Uterus (tissue), 4 donors: ENCODE measurements at regions of chr1 and their contacts with region 1.

Region 1: GRCh38 chr1:160193091-160193819 is 2.9 kb downstream of the CASQ1 start:
- DNase-seq: peak; percentile 87 to 90
- H3K4me3 ChIP-seq: no peak overlapping the region
- H3K27ac ChIP-seq: no peak overlapping the region
- H3K4me1 ChIP-seq: peaks cover 0 to 5% of the 10 kb centered on the region in 2 donors
- H3K27me3 ChIP-seq: no peaks in the 10 kb centered on the region
- CTCF ChIP-seq: peak; percentile 93 to 98 (median 97)
- POLR2A ChIP-seq: peak in 1 of 2 donors; percentile 27

Region 2: DNA sequence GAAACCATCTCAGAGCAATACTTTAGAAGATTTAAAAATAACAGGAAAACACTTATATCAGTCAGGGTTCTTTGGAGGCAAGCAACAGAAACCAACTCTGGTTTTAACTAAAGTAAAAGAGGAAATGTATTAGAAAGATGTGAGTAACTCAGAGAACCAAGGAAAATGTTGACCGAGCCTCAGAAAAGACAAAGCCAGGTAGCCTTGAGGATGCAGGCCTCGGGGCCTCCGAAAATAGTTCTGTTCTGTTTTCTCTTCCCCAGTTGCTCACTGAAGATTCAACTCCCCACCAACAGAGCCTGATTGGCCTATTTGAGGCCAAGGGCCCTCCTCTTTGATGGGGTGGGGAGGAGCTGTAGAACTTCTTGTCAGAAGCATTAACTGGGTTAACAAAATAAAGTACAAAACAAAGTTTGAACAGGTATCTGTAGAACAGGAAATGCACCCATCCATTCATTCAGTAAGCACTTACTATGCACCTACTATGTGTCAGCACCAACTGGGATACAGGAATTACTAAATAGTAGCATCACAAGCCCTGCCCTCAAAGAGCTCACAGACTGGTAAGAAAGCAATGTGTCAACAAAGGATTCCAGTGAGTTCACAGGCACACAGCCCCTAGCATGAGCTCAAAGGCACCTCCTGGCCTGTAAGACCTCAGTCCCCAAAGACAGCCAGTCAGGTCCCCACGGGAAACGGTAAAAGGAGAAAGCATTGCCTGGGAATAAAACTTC is 354.0 kb before region 1 on chr1:
- intact Hi-C with region 1: no loop called
- DNase-seq: no peak
- H3K4me3 ChIP-seq: no peak overlapping the region
- H3K27ac ChIP-seq: no peak overlapping the region
- H3K4me1 ChIP-seq: no peaks in the 10 kb centered on the region
- H3K27me3 ChIP-seq: no peaks in the 10 kb centered on the region
- CTCF ChIP-seq: no peak
- POLR2A ChIP-seq: no peak

Region 3: GRCh38 chr1:160098852-160099561 is 94.2 kb before region 1 on chr1:
- intact Hi-C with region 1: loop called (anchors 10 kb)
- DNase-seq: peak; percentile 99
- H3K4me3 ChIP-seq: peak overlapping the region; percentile 90 to 99
- H3K27ac ChIP-seq: peak overlapping the region; percentile 85 to 91
- H3K4me1 ChIP-seq: peaks cover 7 to 10% of the 10 kb centered on the region in 2 donors
- H3K27me3 ChIP-seq: no peaks in the 10 kb centered on the region
- CTCF ChIP-seq: peak in 1 of 4 experiments; percentile 10
- POLR2A ChIP-seq: peak; percentile 59 to 70

Region 4: DNA sequence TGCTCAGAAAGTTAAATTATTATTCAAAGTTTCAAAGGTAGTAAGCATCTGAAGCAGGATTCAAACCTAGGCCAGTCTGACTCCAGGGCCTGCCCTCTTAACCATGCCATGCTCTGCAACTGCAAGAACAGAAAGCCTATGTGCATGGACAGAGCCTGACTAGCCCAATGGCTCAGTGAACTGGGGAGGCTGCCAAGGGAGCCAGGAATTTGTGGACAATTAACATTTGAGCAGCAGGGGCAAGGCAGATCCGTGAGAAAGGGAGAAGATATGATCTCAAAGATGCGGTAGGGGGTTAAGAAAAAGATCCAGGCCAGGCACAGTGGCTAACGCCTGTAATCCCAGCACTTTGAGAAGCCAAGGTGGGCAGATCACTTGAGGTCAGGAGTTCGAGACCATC is 48.3 kb before region 1 on chr1:
- intact Hi-C with region 1: no loop called
- DNase-seq: no peak
- H3K4me3 ChIP-seq: no peak overlapping the region
- H3K27ac ChIP-seq: no peak overlapping the region
- H3K4me1 ChIP-seq: no peaks in the 10 kb centered on the region
- H3K27me3 ChIP-seq: no peaks in the 10 kb centered on the region
- CTCF ChIP-seq: no peak
- POLR2A ChIP-seq: no peak

Region 5: GRCh38 chr1:160251687-160252526 is 58.7 kb after region 1 on chr1:
- intact Hi-C with region 1: loop called (anchors 10 kb)
- DNase-seq: peak; percentile 46 to 69
- H3K4me3 ChIP-seq: no peak overlapping the region
- H3K27ac ChIP-seq: peak overlapping the region in 1 of 2 donors; percentile 28
- H3K4me1 ChIP-seq: no peaks in the 10 kb centered on the region
- H3K27me3 ChIP-seq: no peaks in the 10 kb centered on the region
- CTCF ChIP-seq: peak; percentile 50 to 88 (median 74)
- POLR2A ChIP-seq: no peak

Region 6: GRCh38 chr1:160291248-160292220 is 98.3 kb after region 1 on chr1:
- intact Hi-C with region 1: loop called (anchors 5 kb)
- DNase-seq: peak; percentile 54 to 62
- H3K4me3 ChIP-seq: no peak overlapping the region
- H3K27ac ChIP-seq: no peak overlapping the region
- H3K4me1 ChIP-seq: no peaks in the 10 kb centered on the region
- H3K27me3 ChIP-seq: no peaks in the 10 kb centered on the region
- CTCF ChIP-seq: peak; percentile 70 to 84 (median 78)
- POLR2A ChIP-seq: no peak